A549 (cell line): ENCODE measurements at regions of chr12 and their contacts with region 1.

Region 1: DNA sequence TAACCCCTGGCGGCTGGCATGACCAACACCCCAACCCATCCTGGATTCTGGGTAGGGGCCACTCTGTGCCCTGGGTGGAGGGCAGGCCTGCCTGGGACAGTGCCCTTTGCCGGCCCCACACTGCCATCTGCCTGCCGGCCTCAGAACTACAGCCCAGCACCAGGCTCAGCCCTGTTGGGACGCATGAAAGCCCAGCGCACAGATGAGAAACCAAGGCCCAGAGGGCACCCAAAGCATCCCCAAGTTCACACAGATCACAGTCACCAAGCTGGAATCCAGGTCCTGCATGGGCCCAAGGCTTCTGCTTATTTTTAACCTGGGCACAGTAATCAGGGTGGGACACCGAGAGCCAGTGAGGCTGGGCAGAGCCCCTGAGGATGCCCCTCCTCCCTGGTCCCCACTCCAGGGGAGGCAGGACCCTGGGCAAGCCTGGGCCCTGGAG is 26.2 kb downstream of the RFLNA start:
- DNase-seq: peak; percentile 61 to 71
- ATAC-seq: peak; percentile 25 to 85
- H3K4me3 ChIP-seq: no peak overlapping the region
- H3K27ac ChIP-seq: 0 out of 6 replicates have a peak overlapping the region, but pooled peaks of 1 of the 2 experiments have one; percentile 9
- H3K4me1 ChIP-seq: no peaks in the 10 kb centered on the region
- CTCF ChIP-seq: peak; percentile 77
- EP300 ChIP-seq: no peak
- POLR2A ChIP-seq: no peak
- RAD21 ChIP-seq: peak; percentile 84 to 90

Region 2: DNA sequence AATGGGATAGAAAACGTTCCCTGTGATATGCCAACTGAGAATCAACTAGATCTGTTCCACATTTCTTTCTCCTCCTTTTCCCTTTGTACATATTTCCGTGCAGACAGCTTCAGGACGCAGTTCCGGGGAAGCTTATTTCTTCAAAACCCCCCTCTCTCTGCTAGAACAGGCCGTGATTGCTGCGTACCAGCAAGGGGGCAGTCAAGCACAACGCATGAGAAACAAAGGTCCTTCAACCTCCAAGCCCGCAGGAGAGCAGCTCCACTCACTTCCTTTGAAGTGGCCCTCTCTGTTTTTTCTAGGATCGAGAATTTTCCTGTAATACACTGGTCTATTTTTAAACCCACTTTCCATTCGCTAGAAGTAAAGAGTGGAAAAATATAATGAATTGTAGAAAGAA is 267.2 kb before region 1 on chr12:
- CTCF ChIA-PET with region 1: interaction called, 14 read pairs
- POLR2A ChIA-PET with region 1: no interaction called
- DNase-seq: peak; percentile 44 to 73
- ATAC-seq: peak; percentile 94 to 96
- H3K4me3 ChIP-seq: no peak overlapping the region
- H3K27ac ChIP-seq: no peak overlapping the region
- H3K4me1 ChIP-seq: 0 out of 3 replicates have a peak, but pooled peaks cover 3% of the 10 kb centered on the region
- CTCF ChIP-seq: peak; percentile 58
- EP300 ChIP-seq: no peak
- POLR2A ChIP-seq: no peak
- RAD21 ChIP-seq: peak; percentile 78 to 86

Region 3: GRCh38 chr12:124087266-124088051 is 233.6 kb before region 1 on chr12:
- CTCF ChIA-PET with region 1: no interaction called
- POLR2A ChIA-PET with region 1: no interaction called
- DNase-seq: no peak
- ATAC-seq: no peak
- H3K4me3 ChIP-seq: no peak overlapping the region
- H3K27ac ChIP-seq: no peak overlapping the region
- H3K4me1 ChIP-seq: no peaks in the 10 kb centered on the region
- CTCF ChIP-seq: no peak
- EP300 ChIP-seq: no peak
- POLR2A ChIP-seq: no peak
- RAD21 ChIP-seq: no peak

Region 4: GRCh38 chr12:124341645-124342069 is 20.6 kb after region 1 on chr12:
- CTCF ChIA-PET with region 1: no interaction called
- POLR2A ChIA-PET with region 1: no interaction called
- DNase-seq: no peak
- ATAC-seq: no peak
- H3K4me3 ChIP-seq: no peak overlapping the region
- H3K27ac ChIP-seq: no peak overlapping the region
- H3K4me1 ChIP-seq: 0 out of 3 replicates have a peak, but pooled peaks cover 3% of the 10 kb centered on the region
- CTCF ChIP-seq: no peak
- EP300 ChIP-seq: no peak
- POLR2A ChIP-seq: no peak
- RAD21 ChIP-seq: no peak